ENCODE measurements at regions of chr16 and their contacts with region 1.

Region 1: GRCh38 chr16:84186685-84187437 is at the start of gene TAF1C:
- DNase-seq: peak; percentile 87
- H3K4me3 ChIP-seq: peak within 1 kb of the TSS; percentile 92 to 97 (median 97)
- H3K27ac ChIP-seq: peak within 1 kb of the TSS; percentile 51
- H3K4me1 ChIP-seq: peaks cover 3% of the 10 kb centered on the region
- H3K27me3 ChIP-seq: no peaks in the 10 kb centered on the region
- CTCF ChIP-seq: peak; percentile 81 to 98
- total RNA-seq, gene TAF1C: 15.3 to 30.1 TPM

Region 2: GRCh38 chr16:83926726-83927397 is 260.0 kb before region 1 on chr16:
- CTCF ChIA-PET with region 1: interaction called, 6 read pairs
- dilution Hi-C with region 1: no loop called
- in situ Hi-C with region 1: loop called in 1 of 2 experiments (anchors 25 kb)
- intact Hi-C with region 1: no loop called
- DNase-seq: peak; percentile 81
- H3K4me3 ChIP-seq: peak overlapping the region; percentile 15 to 44 (median 43)
- H3K27ac ChIP-seq: peak overlapping the region; percentile 51
- H3K4me1 ChIP-seq: peaks cover 26% of the 10 kb centered on the region
- H3K27me3 ChIP-seq: no peaks in the 10 kb centered on the region
- CTCF ChIP-seq: peak; percentile 83 to 98

Region 3: DNA sequence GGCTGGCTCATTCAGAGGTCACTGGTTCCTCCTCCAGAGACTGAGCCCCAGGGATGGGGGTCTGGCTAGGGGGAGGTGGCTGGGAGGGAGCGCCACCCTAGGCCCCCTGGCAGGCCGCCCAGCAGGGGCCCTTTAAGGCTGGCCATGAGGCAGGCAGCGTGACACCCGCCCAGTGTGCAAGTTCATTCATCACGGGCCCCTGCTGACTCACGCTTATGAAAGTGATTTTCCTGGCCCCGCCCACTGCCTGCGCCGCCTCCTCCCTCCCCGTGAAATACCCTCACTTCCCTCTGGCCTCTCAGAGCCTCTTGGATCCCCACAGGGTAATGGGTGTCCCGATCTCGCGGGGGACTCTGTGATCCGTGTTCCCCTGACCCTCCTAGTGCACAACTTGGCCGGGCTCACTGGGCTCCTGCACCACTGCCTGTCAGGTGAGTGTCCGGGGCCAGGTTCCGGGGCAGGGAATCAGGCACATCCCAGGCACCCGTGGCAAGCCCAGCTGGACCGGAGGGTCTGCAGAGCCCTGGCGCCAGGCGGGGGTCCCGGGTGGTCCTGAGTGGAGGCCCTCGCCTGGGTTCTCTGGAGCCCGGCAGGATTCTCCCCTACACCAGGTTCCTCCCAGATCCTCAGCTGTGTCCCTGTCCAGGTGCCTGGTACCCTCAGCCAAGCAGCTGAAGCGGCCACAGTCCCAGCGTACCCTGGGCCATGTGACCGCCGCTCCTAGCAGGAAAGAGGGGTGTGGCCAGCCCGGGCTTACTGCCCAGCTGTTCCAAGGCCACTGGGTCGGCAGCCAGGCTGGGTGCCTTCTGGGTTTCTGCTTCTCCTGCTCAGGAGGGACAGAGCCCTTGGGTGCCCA is 233.7 kb before region 1 on chr16 and contains the start of gene OSGIN1:
- CTCF ChIA-PET with region 1: interaction called, 3 read pairs
- dilution Hi-C with region 1: no loop called
- in situ Hi-C with region 1: loop called in 1 of 2 experiments (anchors 25 kb)
- intact Hi-C with region 1: loop called (anchors 5 kb)
- DNase-seq: peak; percentile 92
- H3K4me3 ChIP-seq: peak within 1 kb of the TSS; percentile 65 to 76 (median 66)
- H3K27ac ChIP-seq: peak within 1 kb of the TSS; percentile 82
- H3K4me1 ChIP-seq: peaks cover 21% of the 10 kb centered on the region
- H3K27me3 ChIP-seq: no peaks in the 10 kb centered on the region
- CTCF ChIP-seq: no peak
- total RNA-seq, gene OSGIN1: 3.3 to 9.3 TPM

Region 4: GRCh38 chr16:84116720-84117493 is 70.0 kb before region 1 on chr16 and contains the start of gene MBTPS1:
- CTCF ChIA-PET with region 1: interaction called, 5 read pairs
- dilution Hi-C with region 1: no loop called
- in situ Hi-C with region 1: no loop called
- intact Hi-C with region 1: loop called (anchors 2 kb)
- DNase-seq: peak; percentile 98
- H3K4me3 ChIP-seq: peak within 1 kb of the TSS; percentile 73 to 97 (median 86)
- H3K27ac ChIP-seq: peak within 1 kb of the TSS; percentile 83
- H3K4me1 ChIP-seq: peaks cover 7% of the 10 kb centered on the region
- H3K27me3 ChIP-seq: no peaks in the 10 kb centered on the region
- CTCF ChIP-seq: no peak
- total RNA-seq, gene MBTPS1: 65.0 to 101 TPM

Region 5: DNA sequence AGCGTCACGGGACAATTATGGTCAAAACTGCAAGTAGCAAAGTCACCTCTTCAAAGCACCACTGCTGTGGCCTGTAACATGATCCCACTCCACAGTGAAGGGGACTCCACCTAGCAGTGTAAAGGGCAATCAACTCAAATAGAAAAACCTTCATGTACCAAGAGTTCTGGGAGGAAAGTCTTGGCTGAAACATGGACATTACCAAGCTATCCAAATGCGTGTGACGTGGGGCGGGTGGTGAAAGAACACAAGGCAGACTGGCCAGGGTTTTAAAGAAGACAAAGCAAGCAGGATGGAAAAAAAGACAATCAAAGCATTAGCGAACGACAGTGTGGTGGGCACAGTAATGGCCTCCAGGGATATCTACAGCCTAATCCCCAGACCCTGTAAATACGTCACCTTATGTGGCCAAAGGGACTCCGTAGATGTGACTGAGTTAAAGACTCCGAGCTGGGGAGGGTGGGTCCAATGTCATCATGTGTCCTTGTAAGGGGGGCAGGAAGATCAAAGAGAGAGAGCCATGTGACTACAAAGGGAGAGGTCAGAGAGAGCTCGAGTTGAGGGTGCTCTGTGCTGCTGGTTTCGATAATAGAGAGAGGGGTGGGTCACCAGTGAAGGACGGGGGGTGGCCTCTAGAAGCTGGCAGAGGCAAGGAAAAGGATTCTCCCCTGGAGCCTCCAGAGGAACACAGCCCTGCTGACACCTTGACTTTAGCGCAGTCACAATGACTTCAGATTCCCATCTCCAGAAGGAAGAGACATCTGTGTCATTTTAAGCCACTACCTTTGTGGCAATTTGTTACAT is 47.8 kb before region 1 on chr16:
- CTCF ChIA-PET with region 1: no interaction called
- dilution Hi-C with region 1: loop called (anchors 5 kb)
- in situ Hi-C with region 1: no loop called
- intact Hi-C with region 1: no loop called
- DNase-seq: no peak
- H3K4me3 ChIP-seq: no peak overlapping the region
- H3K27ac ChIP-seq: no peak overlapping the region
- H3K4me1 ChIP-seq: peaks cover under 1% of the 10 kb centered on the region
- H3K27me3 ChIP-seq: no peaks in the 10 kb centered on the region
- CTCF ChIP-seq: no peak

Region 6: DNA sequence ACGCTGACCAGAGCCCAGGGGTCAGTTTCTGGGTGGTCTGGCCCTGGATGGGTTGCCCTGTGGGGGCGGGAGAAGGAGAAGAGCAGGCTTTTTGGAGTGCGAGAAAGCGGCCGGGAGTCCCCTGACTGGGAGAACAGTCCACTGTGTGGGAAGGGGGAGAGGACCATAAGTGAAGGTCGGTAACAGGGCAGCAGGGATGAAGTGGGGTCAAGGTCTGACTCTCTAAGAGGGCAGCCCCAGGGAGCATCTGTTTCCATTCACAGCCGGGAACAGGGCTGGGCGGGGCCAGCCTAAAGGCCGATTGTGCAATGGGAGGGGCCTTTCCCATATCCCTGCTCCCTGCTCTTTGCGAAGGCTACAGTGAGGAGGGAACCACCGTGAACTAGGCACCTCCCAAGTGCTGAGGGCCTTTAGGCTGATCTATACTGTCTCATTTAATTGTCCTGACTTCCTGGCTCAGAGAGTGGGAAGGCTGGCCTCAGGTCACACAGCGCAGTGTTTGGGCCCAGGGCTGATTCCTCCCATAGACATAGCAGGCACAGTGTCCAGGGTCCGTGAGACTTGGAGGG is 97.4 kb after region 1 on chr16:
- CTCF ChIA-PET with region 1: no interaction called
- dilution Hi-C with region 1: no loop called
- in situ Hi-C with region 1: no loop called
- intact Hi-C with region 1: no loop called
- DNase-seq: no peak
- H3K4me3 ChIP-seq: no peak overlapping the region
- H3K27ac ChIP-seq: no peak overlapping the region
- H3K4me1 ChIP-seq: no peaks in the 10 kb centered on the region
- H3K27me3 ChIP-seq: no peaks in the 10 kb centered on the region
- CTCF ChIP-seq: no peak